IMR-90 (cell line): ENCODE measurements at regions of chr15 and their contacts with region 1.

Region 1: GRCh38 chr15:44102675-44103254 is 92.3 kb downstream of the FRMD5 start:
- DNase-seq: peak; percentile 99
- ATAC-seq: peak; percentile 93
- H3K4me3 ChIP-seq: no peak overlapping the region
- H3K27ac ChIP-seq: peak overlapping the region; percentile 27; the same call in 1 of the 2 replicates
- H3K4me1 ChIP-seq: peaks cover 11% of the 10 kb centered on the region
- H3K27me3 ChIP-seq: no peaks in the 10 kb centered on the region
- CTCF ChIP-seq: no peak
- POLR2A ChIP-seq: no peak
- RAD21 ChIP-seq: peak; percentile 17; the same call in 1 of the 2 replicates

Region 2: GRCh38 chr15:43977072-43977884 is 125.5 kb before region 1 on chr15:
- CTCF ChIA-PET with region 1: no interaction called
- POLR2A ChIA-PET with region 1: no interaction called
- dilution Hi-C with region 1: no loop called
- in situ Hi-C with region 1: no loop called
- intact Hi-C with region 1: no loop called
- DNase-seq: no peak
- ATAC-seq: no peak
- H3K4me3 ChIP-seq: no peak overlapping the region
- H3K27ac ChIP-seq: no peak overlapping the region
- H3K4me1 ChIP-seq: no peaks in the 10 kb centered on the region
- H3K27me3 ChIP-seq: no peaks in the 10 kb centered on the region
- CTCF ChIP-seq: no peak
- POLR2A ChIP-seq: no peak
- RAD21 ChIP-seq: no peak

Region 3: DNA sequence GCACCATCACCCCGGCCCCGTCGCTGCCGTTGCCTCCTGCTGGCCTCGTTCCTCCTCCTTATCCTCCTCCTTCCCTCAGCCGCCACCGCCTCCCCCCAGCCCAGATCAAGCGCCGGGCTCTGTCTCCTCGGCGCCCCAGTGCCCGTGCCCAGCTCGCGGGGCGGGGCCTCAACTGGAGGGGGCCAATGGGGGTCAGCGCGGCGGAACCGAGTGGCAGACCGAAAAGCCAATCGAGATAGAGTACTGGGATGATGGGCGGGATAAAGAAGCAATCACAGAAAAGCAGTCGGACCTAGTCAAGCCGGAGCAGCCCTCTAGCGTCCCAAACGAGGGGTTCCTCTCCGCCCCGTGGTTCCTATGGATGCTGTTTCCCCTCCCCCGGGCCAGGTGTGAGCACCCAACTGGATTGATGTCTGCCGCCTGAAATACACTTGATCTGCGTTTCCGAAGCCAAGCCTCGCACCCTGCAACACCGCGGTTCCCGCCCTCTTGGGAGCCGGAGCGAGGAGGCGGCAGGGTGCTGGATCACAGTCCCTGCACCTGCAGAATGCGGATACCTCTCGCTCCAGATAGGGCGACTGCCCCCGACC is 92.5 kb after region 1 on chr15 and contains the start of gene FRMD5:
- CTCF ChIA-PET with region 1: no interaction called
- POLR2A ChIA-PET with region 1: no interaction called
- dilution Hi-C with region 1: no loop called
- in situ Hi-C with region 1: no loop called
- intact Hi-C with region 1: loop called (anchors 10 kb)
- DNase-seq: peak; percentile 95
- ATAC-seq: peak; percentile 99
- H3K4me3 ChIP-seq: peak within 1 kb of the TSS; percentile 70
- H3K27ac ChIP-seq: no peak within 1 kb of the TSS; the same call in 1 of the 2 replicates
- H3K4me1 ChIP-seq: no peaks in the 10 kb centered on the region; the same call in 1 of the 2 replicates
- H3K27me3 ChIP-seq: no peaks in the 10 kb centered on the region
- CTCF ChIP-seq: peak; percentile 52
- POLR2A ChIP-seq: no peak
- RAD21 ChIP-seq: peak; percentile 14; the same call in 1 of the 2 replicates
- total RNA-seq, gene FRMD5: 5.4 and 5.6 TPM in 2 replicates

Region 4: DNA sequence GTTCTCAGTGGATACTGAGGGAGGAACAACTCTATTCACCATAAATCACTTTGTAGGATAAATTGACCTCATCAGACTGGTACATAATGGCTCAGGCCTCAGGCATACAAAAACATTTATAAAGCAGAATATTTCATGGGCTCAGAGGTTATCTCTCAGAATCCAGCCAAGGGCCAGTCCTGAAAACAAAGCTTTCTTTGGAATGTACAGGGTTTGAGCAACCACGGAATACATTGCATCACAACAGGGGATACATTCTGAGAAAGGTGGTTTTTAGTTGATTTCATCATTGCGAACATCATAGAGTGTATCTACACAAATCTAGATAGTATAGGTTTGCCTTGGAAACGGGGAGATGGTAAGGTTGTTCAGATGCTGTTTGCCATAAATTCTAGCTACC is 291.3 kb after region 1 on chr15:
- CTCF ChIA-PET with region 1: no interaction called
- POLR2A ChIA-PET with region 1: no interaction called
- dilution Hi-C with region 1: no loop called
- in situ Hi-C with region 1: no loop called
- intact Hi-C with region 1: no loop called
- DNase-seq: peak; percentile 42
- ATAC-seq: peak; percentile 53
- H3K4me3 ChIP-seq: no peak overlapping the region
- H3K27ac ChIP-seq: no peak overlapping the region
- H3K4me1 ChIP-seq: no peaks in the 10 kb centered on the region
- H3K27me3 ChIP-seq: no peaks in the 10 kb centered on the region
- CTCF ChIP-seq: no peak
- POLR2A ChIP-seq: no peak
- RAD21 ChIP-seq: no peak